K562 (cell line): ENCODE measurements at regions of chr5 and their contacts with region 1.

Region 1: DNA sequence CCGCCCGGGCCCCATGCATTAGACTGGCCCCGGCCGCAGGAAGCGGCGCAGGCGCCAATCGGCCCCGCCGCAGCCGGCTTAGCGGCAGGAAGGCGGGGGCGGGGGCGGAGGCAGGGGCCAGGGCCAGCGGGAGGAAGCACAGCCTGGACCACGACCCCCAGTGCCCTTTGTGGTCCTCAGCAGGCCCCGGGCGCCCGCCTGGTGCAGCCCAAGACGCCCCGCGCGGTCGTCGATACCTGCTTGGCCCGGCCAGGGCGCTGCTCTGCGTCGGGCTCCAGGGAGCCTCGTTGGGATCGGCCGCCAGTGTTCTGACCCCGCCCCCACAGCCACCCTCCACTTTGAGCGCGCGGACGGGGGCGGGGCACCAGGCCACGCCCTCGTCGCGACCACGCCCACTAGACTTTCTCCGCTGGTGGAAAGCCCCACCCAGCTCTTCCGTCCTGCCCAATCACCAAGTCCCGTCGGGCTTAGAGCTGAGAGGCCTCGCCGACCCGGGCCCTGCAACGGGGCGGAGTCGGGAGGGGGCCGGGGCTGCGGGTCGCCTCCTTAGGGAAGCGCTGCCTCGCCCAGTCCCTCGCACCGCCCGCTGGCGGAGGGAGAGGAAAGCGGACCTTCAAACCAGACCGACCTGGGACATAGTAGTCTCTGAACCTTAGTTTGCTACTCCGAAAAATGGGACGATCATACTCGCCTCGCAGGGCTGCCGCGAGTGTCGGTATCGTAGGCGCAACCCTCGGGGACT is at the start of gene PDLIM7:
- DNase-seq: peak; percentile 97 to 99 (median 98)
- ATAC-seq: peak; percentile 81
- H3K4me3 ChIP-seq: peak within 1 kb of the TSS; percentile 82
- H3K27ac ChIP-seq: peak within 1 kb of the TSS; percentile 95
- H3K4me1 ChIP-seq: peaks cover 57 to 85% of the 10 kb centered on the region in 2 experiments
- H3K27me3 ChIP-seq: no peaks in the 10 kb centered on the region
- CTCF ChIP-seq: peak; percentile 31 to 37 (median 35); a peak in 2 of 6 replicates
- EP300 ChIP-seq: no peak; the same call in none of the 2 replicates
- POLR2A ChIP-seq: peak; percentile 97
- RAD21 ChIP-seq: 0 out of 4 replicates have a peak, but pooled peaks of 1 of the 2 experiments have one; percentile 2
- polyA plus RNA-seq, gene PDLIM7: 2.1 to 4.1 TPM

Region 2: DNA sequence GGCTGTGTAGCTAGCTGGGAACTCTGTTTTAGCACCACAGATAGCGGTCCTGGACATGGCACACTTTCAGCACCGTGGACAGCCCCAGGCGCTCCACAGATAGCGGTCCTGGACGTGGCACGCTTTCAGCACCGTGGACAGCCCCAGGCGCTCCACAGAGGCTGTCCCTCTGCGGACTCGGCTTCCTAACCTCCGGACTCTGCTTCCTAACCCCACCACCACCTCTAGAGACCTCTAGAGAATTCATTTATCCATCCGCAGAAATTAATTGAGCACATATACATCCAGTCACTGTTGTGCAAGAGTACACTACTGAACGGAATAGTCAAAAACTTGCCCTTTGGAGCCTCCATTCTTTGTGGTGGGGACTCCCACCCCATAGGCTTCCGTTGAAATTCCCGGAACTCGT is 659.8 kb before region 1 on chr5:
- CTCF ChIA-PET with region 1: no interaction called
- POLR2A ChIA-PET with region 1: no interaction called
- in situ Hi-C with region 1: no loop called
- intact Hi-C with region 1: no loop called
- DNase-seq: peak; percentile 80 to 91 (median 86)
- ATAC-seq: peak; percentile 99
- H3K4me3 ChIP-seq: no peak overlapping the region
- H3K27ac ChIP-seq: no peak overlapping the region
- H3K4me1 ChIP-seq: peaks cover 0 to 3% of the 10 kb centered on the region in 2 experiments; a peak in 1 of 5 replicates
- H3K27me3 ChIP-seq: peaks cover 5 to 53% of the 10 kb centered on the region in 2 experiments; a peak in 3 of 5 replicates
- CTCF ChIP-seq: peak in 1 of 3 experiments; percentile 15; a peak in 1 of 6 replicates
- EP300 ChIP-seq: no peak
- POLR2A ChIP-seq: no peak
- RAD21 ChIP-seq: 0 out of 4 replicates have a peak, but pooled peaks of 1 of the 2 experiments have one; percentile 4

Region 3: GRCh38 chr5:177317959-177318377 is 179.5 kb before region 1 on chr5:
- CTCF ChIA-PET with region 1: interaction called, 3 read pairs
- POLR2A ChIA-PET with region 1: no interaction called
- in situ Hi-C with region 1: no loop called
- intact Hi-C with region 1: loop called (anchors 5 kb)
- DNase-seq: peak; percentile 60 to 85 (median 70)
- ATAC-seq: peak; percentile 78
- H3K4me3 ChIP-seq: no peak overlapping the region
- H3K27ac ChIP-seq: no peak overlapping the region
- H3K4me1 ChIP-seq: peaks cover 4 to 33% of the 10 kb centered on the region in 2 experiments
- H3K27me3 ChIP-seq: no peaks in the 10 kb centered on the region
- CTCF ChIP-seq: peak; percentile 87 to 98 (median 94)
- EP300 ChIP-seq: no peak
- POLR2A ChIP-seq: no peak
- RAD21 ChIP-seq: peak; percentile 70 to 87

Region 4: GRCh38 chr5:177403792-177404640 is 93.4 kb before region 1 on chr5:
- CTCF ChIA-PET with region 1: interaction called, 7 read pairs
- POLR2A ChIA-PET with region 1: interaction called, 8 read pairs
- in situ Hi-C with region 1: no loop called
- intact Hi-C with region 1: loop called (anchors 2 kb)
- DNase-seq: peak; percentile 94 to 95 (median 94)
- ATAC-seq: peak; percentile 96
- H3K4me3 ChIP-seq: peak overlapping the region; percentile 62
- H3K27ac ChIP-seq: peak overlapping the region; percentile 86
- H3K4me1 ChIP-seq: peaks cover 10 to 48% of the 10 kb centered on the region in 2 experiments
- H3K27me3 ChIP-seq: no peaks in the 10 kb centered on the region
- CTCF ChIP-seq: peak; percentile 81 to 96 (median 94)
- EP300 ChIP-seq: no peak; the same call in 1 of the 2 replicates
- POLR2A ChIP-seq: peak; percentile 77
- RAD21 ChIP-seq: peak; percentile 94 to 95

Region 5: GRCh38 chr5:177478711-177479646 is 18.5 kb before region 1 on chr5:
- CTCF ChIA-PET with region 1: no interaction called
- POLR2A ChIA-PET with region 1: interaction called, 21 read pairs
- in situ Hi-C with region 1: no loop called
- intact Hi-C with region 1: no loop called
- DNase-seq: no peak
- ATAC-seq: peak; percentile 31
- H3K4me3 ChIP-seq: no peak overlapping the region
- H3K27ac ChIP-seq: peak overlapping the region; percentile 62; the same call in 2 of the 3 replicates
- H3K4me1 ChIP-seq: peaks cover 33 to 46% of the 10 kb centered on the region in 2 experiments
- H3K27me3 ChIP-seq: no peaks in the 10 kb centered on the region
- CTCF ChIP-seq: no peak
- EP300 ChIP-seq: no peak
- POLR2A ChIP-seq: 0 out of 2 replicates have a peak, but pooled peaks have one; percentile 9
- RAD21 ChIP-seq: no peak

Region 6: DNA sequence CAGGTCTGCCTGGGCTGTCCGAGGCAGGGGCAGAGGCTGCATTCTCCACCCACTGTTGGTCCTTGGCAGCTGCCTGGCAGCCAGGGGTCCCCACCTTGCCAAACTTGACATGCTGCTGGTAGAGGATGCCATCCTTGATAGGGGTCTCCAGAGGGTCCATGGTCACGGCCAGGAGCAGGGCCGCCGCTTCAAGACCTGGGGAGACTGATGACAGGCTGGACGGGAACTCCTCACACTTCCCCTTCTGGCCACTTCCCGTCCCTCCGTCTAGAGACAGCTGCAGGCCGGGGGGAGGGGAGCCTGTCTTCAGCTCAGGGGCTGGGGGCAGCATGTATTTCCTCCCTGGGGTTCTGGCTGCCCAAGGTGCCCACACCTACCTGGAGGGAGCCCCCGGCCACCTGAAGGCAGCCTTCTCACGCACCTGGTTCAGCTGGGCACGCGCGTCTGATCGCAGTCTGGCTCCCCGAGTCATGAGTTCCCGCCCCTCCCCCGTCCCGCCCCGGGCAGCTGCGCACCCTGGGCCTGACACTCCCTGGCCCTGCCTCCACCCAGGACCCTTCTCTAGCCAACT is 12.0 kb after region 1 on chr5 and contains the start of gene DOK3:
- CTCF ChIA-PET with region 1: no interaction called
- POLR2A ChIA-PET with region 1: interaction called, 26 read pairs
- in situ Hi-C with region 1: no loop called
- intact Hi-C with region 1: no loop called
- DNase-seq: peak; percentile 59 to 72 (median 66)
- ATAC-seq: peak; percentile 80
- H3K4me3 ChIP-seq: peak within 1 kb of the TSS; percentile 37
- H3K27ac ChIP-seq: peak within 1 kb of the TSS; percentile 80
- H3K4me1 ChIP-seq: peaks cover 27 to 60% of the 10 kb centered on the region in 2 experiments
- H3K27me3 ChIP-seq: no peaks in the 10 kb centered on the region
- CTCF ChIP-seq: no peak
- EP300 ChIP-seq: no peak
- POLR2A ChIP-seq: no peak; the same call in 1 of the 2 replicates
- RAD21 ChIP-seq: no peak
- polyA plus RNA-seq, gene DOK3: 1.3 to 1.7 TPM

Region 7: DNA sequence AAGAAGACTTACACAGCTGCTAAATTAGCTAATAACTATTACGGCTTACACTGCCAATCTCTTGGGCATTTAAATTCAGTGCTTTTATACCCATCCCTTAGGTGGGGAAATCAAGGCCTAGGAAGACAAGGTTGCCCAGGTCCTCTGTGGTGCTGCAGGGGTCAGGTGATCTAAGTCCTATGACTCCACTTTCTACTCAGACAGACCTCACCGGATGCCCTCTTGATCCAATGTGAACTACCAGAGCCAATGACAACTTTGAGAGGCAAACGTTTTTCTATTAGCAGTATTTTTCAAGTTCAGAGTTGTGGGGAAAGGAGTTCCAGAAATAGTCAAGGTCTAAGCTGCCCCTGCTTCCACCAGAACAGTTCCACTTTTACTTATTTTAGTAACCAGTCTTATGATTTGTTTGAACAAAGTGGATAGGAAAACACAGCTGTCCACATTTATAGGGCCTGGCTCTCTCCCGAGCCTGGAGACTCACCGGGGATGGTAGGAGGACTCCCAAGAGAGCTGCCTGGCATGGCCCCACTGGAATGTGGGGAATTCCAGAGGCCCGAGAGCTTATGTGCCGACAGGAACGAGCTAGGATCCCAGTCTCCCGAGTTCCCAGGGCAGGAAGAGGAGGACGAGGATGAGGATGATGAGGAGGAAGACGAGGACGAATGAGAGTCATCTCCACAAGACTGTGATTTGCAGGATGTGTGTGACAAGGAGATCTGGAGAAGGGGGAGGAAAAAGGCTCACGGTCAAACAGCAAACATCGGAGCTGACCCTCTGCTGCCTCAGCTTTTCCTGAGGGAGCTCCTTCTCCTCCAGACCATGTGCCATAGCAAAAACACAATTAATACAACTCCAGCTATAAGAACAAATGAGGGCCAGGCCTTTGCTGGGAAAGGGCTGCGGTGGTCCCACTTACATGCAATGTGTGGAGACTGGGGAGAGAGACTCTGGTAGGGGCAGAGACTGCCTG is 40.2 kb after region 1 on chr5:
- CTCF ChIA-PET with region 1: no interaction called
- POLR2A ChIA-PET with region 1: no interaction called
- in situ Hi-C with region 1: no loop called
- intact Hi-C with region 1: no loop called
- DNase-seq: no peak
- ATAC-seq: no peak
- H3K4me3 ChIP-seq: no peak overlapping the region
- H3K27ac ChIP-seq: no peak overlapping the region
- H3K4me1 ChIP-seq: no peaks in the 10 kb centered on the region
- H3K27me3 ChIP-seq: no peaks in the 10 kb centered on the region
- CTCF ChIP-seq: no peak
- EP300 ChIP-seq: no peak
- POLR2A ChIP-seq: no peak
- RAD21 ChIP-seq: no peak

Region 8: DNA sequence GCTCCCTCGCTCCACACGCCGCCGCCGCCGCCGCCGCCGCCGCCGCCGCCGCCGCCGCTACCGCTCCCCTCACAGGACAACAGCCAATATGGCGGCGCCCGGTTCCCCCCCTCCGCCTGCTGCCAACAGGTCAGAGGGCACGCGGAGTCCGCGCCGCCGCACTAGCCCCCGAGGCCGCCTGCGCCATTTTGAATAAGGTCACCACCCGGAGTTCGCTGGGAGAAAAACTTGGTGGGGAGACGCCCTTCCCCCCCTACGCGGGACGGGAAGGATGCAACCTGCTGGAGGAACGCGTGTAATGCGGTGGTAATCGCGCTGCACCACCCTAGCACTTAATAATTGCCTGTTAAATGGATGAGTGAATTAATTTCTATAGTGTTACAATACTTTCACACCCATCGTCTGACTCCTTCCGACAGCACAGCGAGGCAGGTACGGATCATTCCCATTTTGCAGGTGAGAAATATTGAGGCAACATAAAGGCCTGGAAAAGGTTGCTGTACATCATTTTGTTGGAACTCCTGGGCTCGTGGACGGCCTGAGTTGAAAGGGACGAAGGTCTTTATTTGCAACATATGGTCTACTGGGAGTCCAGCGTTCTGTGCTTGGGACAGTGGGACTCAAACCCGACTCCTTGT is 57.1 kb after region 1 on chr5 and contains the start of gene FAM193B:
- CTCF ChIA-PET with region 1: no interaction called
- POLR2A ChIA-PET with region 1: interaction called, 4 read pairs
- in situ Hi-C with region 1: no loop called
- intact Hi-C with region 1: loop called (anchors 2 kb)
- DNase-seq: peak; percentile 94 to 98 (median 96)
- ATAC-seq: peak; percentile 90
- H3K4me3 ChIP-seq: peak within 1 kb of the TSS; percentile 83
- H3K27ac ChIP-seq: peak within 1 kb of the TSS; percentile 62
- H3K4me1 ChIP-seq: peaks cover 18 to 35% of the 10 kb centered on the region in 2 experiments
- H3K27me3 ChIP-seq: no peaks in the 10 kb centered on the region
- CTCF ChIP-seq: peak; percentile 49 to 53 (median 53)
- EP300 ChIP-seq: no peak
- POLR2A ChIP-seq: no peak
- RAD21 ChIP-seq: peak; percentile 16 to 29; a peak in 2 of 4 replicates
- polyA plus RNA-seq, gene FAM193B: 4.4 to 5.0 TPM

Region 9: GRCh38 chr5:178590141-178590923 is 1092.9 kb after region 1 on chr5 and contains the start of gene COL23A1:
- CTCF ChIA-PET with region 1: no interaction called
- POLR2A ChIA-PET with region 1: no interaction called
- in situ Hi-C with region 1: no loop called
- intact Hi-C with region 1: no loop called
- DNase-seq: peak; percentile 66 to 74 (median 70)
- ATAC-seq: peak; percentile 89
- H3K4me3 ChIP-seq: peak within 1 kb of the TSS; percentile 33
- H3K27ac ChIP-seq: no peak within 1 kb of the TSS
- H3K4me1 ChIP-seq: peaks cover 0 to 16% of the 10 kb centered on the region in 2 experiments; a peak in 3 of 5 replicates
- H3K27me3 ChIP-seq: peaks cover 24 to 41% of the 10 kb centered on the region in 2 experiments
- CTCF ChIP-seq: peak; percentile 82 to 93 (median 88)
- EP300 ChIP-seq: no peak
- POLR2A ChIP-seq: no peak
- RAD21 ChIP-seq: peak; percentile 90 to 91
- polyA plus RNA-seq, gene COL23A1: not detected